CD8-positive, alpha-beta T cell (primary cell): ENCODE measurements at regions of chr5 and their contacts with region 1.

Region 1: DNA sequence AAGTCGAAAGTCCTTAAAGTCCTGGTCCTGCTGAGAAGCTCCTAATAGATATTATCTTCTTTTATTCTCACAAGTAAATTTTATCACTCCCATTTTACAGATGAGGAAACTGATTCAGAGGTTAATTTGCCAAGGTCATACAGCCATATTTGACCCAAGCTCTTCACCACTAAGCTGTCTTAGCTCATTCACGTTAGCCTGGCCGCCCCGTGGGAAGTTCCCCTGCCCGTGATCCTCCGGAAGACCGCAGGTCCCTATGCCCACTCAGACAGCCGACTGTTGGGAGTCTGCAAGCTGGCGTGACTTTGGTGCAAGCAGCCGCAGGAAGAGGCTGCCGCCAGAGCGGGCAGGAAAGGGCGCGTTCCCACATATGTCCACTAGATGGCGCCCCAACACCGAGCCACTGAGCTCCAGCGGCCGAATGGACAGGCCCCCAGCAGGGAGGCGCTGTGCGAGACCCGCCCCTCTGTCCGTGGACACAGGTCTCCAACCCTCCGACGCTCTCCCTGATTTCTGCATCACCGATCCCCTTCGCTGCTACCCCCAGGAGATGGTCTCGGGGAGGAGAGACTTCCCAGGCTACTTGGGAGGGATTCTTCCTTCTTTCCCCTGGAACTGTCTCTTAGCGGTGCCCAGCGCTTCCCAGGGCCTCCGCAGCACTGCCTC is 10.0 kb upstream of the ARAP3 start:
- DNase-seq: peak; percentile 70 to 95 (median 86)
- ATAC-seq: peak; percentile 74
- H3K4me3 ChIP-seq: peak overlapping the region; percentile 16 to 34
- H3K4me3 Mint-ChIP-seq: peak overlapping the region; percentile 67
- H3K27ac ChIP-seq: no peak overlapping the region
- H3K27ac Mint-ChIP-seq: no peak overlapping the region
- H3K4me1 ChIP-seq: peaks cover 18% of the 10 kb centered on the region
- H3K4me1 Mint-ChIP-seq: peaks cover 17% of the 10 kb centered on the region
- H3K27me3 ChIP-seq: no peaks in the 10 kb centered on the region
- H3K27me3 Mint-ChIP-seq: peaks cover 11% of the 10 kb centered on the region
- CTCF ChIP-seq: peak; percentile 97

Region 2: GRCh38 chr5:141650851-141651727 is 40.9 kb before region 1 on chr5 and contains the start of gene FCHSD1:
- CTCF ChIA-PET with region 1: interaction called, 10 read pairs
- POLR2A ChIA-PET with region 1: interaction called, 3 read pairs
- intact Hi-C with region 1: no loop called
- DNase-seq: peak; percentile 70 to 89 (median 81)
- ATAC-seq: peak; percentile 92
- H3K4me3 ChIP-seq: peak within 1 kb of the TSS; percentile 64
- H3K4me3 Mint-ChIP-seq: peak within 1 kb of the TSS; percentile 89
- H3K27ac ChIP-seq: peak within 1 kb of the TSS; percentile 63 to 73
- H3K27ac Mint-ChIP-seq: peak within 1 kb of the TSS; percentile 87
- H3K4me1 ChIP-seq: peaks cover 20% of the 10 kb centered on the region
- H3K4me1 Mint-ChIP-seq: peaks cover 52% of the 10 kb centered on the region
- H3K27me3 ChIP-seq: no peaks in the 10 kb centered on the region
- H3K27me3 Mint-ChIP-seq: no peaks in the 10 kb centered on the region
- CTCF ChIP-seq: no peak
- total RNA-seq, gene FCHSD1: 95.8 to 101 TPM

Region 3: DNA sequence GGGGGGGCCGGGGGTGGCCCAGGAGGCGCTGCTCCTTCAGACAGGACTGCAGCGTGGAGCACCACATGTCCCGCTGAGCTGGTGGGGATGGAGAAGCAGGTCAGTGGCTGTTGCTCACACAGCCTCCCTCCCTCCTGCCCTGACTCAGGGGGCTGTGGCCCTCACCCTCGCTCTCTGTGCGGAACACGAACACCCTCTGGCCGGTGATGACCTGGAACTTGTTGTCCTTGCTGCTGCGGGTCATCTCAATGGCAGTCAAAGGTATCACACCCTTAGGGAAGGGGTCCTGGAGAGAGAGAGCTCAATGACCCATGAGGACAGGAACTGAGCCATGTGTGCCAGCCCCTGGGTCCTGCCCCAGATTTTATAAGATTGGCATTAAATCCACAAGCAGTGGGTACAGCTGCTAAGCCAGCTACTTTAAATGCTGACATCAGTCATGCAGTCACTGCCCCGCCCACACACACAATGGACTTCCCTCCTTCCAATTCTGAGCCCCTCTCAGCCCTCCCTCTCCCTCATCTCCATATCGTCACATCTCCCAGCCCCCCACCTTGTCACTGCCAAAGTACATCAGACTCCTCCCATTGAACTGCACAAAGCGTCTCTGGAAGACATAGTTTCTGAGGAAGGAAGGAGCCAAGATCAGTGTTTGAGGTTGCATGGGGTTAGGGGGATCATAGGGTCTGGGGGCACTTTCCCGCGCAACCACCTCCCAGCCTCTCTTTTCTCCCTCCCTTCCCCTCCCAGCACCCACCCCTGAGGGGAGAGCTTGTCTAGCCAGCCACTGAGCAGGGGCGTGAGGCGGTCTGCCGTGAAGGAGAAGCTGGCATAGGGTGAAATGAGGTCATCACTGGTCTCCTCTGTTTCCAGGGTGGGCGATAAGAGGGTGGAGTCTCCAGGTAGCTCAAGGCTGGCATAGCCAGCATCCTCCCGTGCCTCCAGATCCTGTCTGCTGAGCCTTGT is 18.9 kb before region 1 on chr5:
- CTCF ChIA-PET with region 1: interaction called, 29 read pairs
- POLR2A ChIA-PET with region 1: no interaction called
- intact Hi-C with region 1: no loop called
- DNase-seq: no peak
- ATAC-seq: no peak
- H3K4me3 ChIP-seq: no peak overlapping the region
- H3K4me3 Mint-ChIP-seq: no peak overlapping the region
- H3K27ac ChIP-seq: no peak overlapping the region
- H3K27ac Mint-ChIP-seq: no peak overlapping the region
- H3K4me1 ChIP-seq: no peaks in the 10 kb centered on the region
- H3K4me1 Mint-ChIP-seq: no peaks in the 10 kb centered on the region
- H3K27me3 ChIP-seq: no peaks in the 10 kb centered on the region
- H3K27me3 Mint-ChIP-seq: no peaks in the 10 kb centered on the region
- CTCF ChIP-seq: no peak

Region 4: DNA sequence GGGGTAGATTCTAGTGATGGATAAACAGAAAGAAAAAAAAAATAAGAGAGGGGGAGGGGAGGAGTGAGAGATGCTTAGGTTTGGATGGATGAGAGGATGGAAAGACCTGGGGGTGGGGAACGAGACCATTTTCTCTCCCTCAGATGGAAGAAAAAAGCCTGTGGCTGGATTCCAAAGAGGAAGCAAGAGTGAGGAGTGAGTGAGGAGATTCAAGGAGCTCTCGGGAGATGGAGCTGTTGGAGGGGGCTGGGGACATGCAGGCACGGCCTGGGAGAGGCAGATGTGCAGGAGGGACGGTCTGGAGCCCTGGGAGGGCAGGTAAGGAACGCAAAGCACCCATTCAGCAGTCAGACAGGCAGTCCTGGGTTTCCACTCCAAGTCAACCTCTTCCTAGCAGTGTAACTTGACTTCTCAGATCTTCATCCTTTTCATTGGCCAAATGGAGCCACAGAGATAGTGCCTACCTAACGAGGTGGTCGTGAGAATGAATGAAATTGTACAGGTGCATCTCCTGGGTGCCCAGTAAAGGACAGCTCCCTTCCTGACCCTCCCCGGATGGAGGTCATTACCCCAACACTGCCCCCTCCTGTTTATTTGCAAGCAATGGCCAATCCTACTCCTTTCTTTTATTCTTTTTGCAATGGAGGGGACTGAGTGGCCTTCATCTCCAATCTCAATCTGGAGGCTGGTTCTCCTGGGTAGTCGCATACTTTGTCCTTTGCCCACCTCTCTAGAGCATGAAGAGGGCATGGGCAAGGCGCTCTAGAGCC is 134.0 kb after region 1 on chr5:
- CTCF ChIA-PET with region 1: interaction called, 19 read pairs
- POLR2A ChIA-PET with region 1: no interaction called
- intact Hi-C with region 1: loop called in 1 of 2 experiments (anchors 1 kb)
- DNase-seq: peak in 2 of 9 experiments; percentile 32 to 38
- ATAC-seq: no peak
- H3K4me3 ChIP-seq: no peak overlapping the region
- H3K4me3 Mint-ChIP-seq: no peak overlapping the region
- H3K27ac ChIP-seq: no peak overlapping the region
- H3K27ac Mint-ChIP-seq: no peak overlapping the region
- H3K4me1 ChIP-seq: no peaks in the 10 kb centered on the region
- H3K4me1 Mint-ChIP-seq: no peaks in the 10 kb centered on the region
- H3K27me3 ChIP-seq: no peaks in the 10 kb centered on the region
- H3K27me3 Mint-ChIP-seq: peaks cover 8% of the 10 kb centered on the region
- CTCF ChIP-seq: no peak

Region 5: DNA sequence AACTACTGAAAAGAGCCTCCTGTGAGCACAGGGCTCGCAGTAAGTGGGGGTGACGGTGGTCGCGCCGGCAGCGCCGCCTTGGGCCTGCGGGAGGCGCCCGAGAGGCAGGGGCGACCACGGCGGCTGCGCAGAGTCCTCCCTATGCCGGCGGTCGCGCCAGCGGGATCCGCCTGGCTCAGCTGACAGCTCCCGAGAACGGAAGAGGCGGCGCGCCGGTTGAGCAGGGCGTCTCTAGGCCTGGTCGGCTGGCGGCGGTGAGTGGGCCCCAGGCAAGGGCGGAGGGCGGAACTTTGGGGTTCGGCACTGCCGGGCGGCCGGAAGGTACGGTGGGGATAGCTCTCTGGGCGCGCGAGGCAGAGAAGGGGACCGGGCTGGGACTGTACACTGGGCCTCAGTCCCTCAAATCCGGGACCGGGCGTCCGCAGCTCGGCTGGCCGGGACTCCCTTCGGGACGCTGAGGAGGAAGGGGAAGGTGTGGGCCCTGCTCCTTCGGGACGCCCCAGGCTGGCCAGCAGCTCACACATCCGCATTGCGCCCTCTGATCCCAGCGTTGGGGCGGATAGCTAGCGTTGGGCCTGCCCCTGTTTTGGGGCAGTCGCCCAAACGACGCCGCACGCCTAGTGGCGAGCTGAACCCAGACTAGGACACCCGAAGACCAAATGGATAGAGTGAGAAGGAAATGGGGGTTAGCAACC is 277.1 kb after region 1 on chr5 and contains the start of gene RNF14:
- CTCF ChIA-PET with region 1: interaction called, 244 read pairs
- POLR2A ChIA-PET with region 1: interaction called, 14 read pairs
- intact Hi-C with region 1: loop called in 1 of 2 experiments (anchors 2 kb)
- DNase-seq: peak; percentile 86 to 97 (median 92)
- ATAC-seq: peak; percentile 94
- H3K4me3 ChIP-seq: peak within 1 kb of the TSS; percentile 77 to 94
- H3K4me3 Mint-ChIP-seq: peak within 1 kb of the TSS; percentile 98
- H3K27ac ChIP-seq: peak within 1 kb of the TSS; percentile 80 to 97
- H3K27ac Mint-ChIP-seq: peak within 1 kb of the TSS; percentile 99
- H3K4me1 ChIP-seq: peaks cover 18% of the 10 kb centered on the region
- H3K4me1 Mint-ChIP-seq: peaks cover 27% of the 10 kb centered on the region
- H3K27me3 ChIP-seq: no peaks in the 10 kb centered on the region
- H3K27me3 Mint-ChIP-seq: no peaks in the 10 kb centered on the region
- CTCF ChIP-seq: peak; percentile 98
- total RNA-seq, gene RNF14: 11.3 to 12.8 TPM

Region 6: DNA sequence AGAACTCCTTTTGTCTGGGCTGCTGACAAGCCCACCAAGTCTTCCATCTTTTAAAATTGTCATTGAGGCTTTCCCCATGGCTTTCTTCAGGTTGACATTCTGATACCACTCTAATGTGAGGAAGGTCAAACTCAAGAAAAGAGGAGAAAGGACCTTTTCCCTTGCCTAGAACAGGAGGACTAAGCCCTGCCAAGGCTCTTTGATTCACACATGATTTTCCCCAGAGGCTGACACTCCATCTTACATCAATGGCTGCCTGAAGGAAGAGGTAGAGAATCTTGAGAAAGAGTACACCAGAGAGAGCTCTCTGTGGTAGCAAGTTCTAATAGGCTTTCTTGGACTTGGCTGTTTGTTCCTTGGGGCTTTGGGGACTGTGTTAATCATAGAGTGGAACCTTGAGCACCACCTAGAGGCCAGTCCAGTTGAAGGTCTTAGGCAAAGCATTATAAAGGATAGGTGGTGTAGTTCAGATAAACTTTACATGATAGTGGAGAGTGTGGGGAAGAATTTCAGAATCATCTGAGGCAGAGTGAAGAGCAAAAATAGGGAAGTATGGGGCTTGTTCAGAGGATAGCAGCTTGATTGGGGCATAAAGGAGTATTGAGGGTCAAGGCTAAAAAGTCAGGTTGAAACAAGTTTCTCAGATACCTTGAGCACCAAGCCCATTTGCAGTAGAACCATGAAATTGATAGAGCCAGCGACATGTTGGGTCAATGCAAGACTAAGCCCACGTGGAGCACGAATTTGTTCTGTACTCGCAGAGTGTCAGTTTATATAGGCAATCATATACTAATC is 453.3 kb after region 1 on chr5:
- CTCF ChIA-PET with region 1: interaction called, 9 read pairs
- POLR2A ChIA-PET with region 1: no interaction called
- intact Hi-C with region 1: loop called (anchors 1 to 5 kb)
- DNase-seq: peak; percentile 18 to 76 (median 61)
- ATAC-seq: peak; percentile 78
- H3K4me3 ChIP-seq: no peak overlapping the region
- H3K4me3 Mint-ChIP-seq: no peak overlapping the region
- H3K27ac ChIP-seq: no peak overlapping the region
- H3K27ac Mint-ChIP-seq: no peak overlapping the region
- H3K4me1 ChIP-seq: no peaks in the 10 kb centered on the region
- H3K4me1 Mint-ChIP-seq: peaks cover 13% of the 10 kb centered on the region
- H3K27me3 ChIP-seq: no peaks in the 10 kb centered on the region
- H3K27me3 Mint-ChIP-seq: no peaks in the 10 kb centered on the region
- CTCF ChIP-seq: peak; percentile 63